ENCODE measurements at regions of chr1 and their contacts with region 1.

Region 1: GRCh38 chr1:31564134-31564989 is 12.0 kb upstream of the TINAGL1 start:
- DNase-seq: no peak
- ATAC-seq: peak; percentile 89
- H3K4me3 ChIP-seq: no peak overlapping the region
- H3K27ac ChIP-seq: no peak overlapping the region
- H3K4me1 ChIP-seq: peaks cover 0 to 4% of the 10 kb centered on the region in 2 donors
- H3K27me3 ChIP-seq: no peaks in the 10 kb centered on the region

Region 2: DNA sequence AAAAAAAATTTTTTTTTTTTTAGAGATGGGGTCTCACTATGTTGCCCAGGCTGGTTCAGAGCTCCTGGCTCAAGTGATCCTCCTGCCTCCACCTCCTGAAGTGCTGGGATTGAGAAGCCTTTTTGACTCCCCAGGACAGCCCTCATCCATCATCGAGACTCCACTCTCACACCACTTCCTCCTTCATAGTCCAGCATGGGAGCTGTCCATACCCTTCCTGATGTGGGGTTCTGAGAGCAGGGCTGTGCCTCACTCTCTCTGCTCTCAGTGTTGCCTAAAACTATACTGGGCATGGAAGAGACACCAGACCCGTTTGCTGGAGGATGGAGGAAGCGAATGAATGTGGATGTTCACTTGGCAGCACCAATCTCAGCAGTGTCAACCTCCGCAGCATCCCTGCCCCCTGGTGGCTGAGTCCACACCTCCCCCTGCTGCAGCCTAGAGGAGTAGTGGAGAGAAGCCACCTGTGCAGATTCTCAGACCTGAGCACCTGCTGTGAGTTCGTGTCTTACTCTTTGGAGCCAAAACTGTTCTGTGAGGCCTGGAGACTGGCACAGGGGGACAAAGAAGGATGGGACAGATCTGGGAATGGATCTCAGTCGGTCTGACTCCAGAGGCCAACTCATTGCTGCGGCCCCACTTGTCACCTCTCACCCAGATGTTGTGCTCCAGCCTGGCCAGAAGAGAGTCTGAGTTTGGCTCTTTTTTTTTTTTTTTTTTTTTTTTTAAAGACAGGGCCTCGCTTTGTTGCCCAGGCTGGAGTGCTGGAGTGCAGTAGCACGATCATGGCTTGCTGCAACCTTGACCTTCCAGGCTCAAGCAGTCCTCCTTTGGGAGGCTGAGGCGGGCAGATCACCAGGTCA is 29.6 kb after region 1 on chr1:
- intact Hi-C with region 1: loop called (anchors 1 kb)
- DNase-seq: peak; percentile 89 to 96
- ATAC-seq: peak; percentile 85
- H3K4me3 ChIP-seq: no peak overlapping the region
- H3K27ac ChIP-seq: no peak overlapping the region
- H3K4me1 ChIP-seq: no peaks in the 10 kb centered on the region
- H3K27me3 ChIP-seq: no peaks in the 10 kb centered on the region

Region 3: GRCh38 chr1:31617917-31618660 is 53.7 kb after region 1 on chr1:
- intact Hi-C with region 1: loop called in 1 of 2 experiments (anchors 2 kb)
- DNase-seq: peak in 1 of 2 donors; percentile 87
- ATAC-seq: peak; percentile 58
- H3K4me3 ChIP-seq: peak overlapping the region; percentile 34 to 50
- H3K27ac ChIP-seq: no peak overlapping the region
- H3K4me1 ChIP-seq: no peaks in the 10 kb centered on the region
- H3K27me3 ChIP-seq: no peaks in the 10 kb centered on the region

Region 4: GRCh38 chr1:31644560-31645273 is 80.4 kb after region 1 on chr1 and contains the start of gene PEF1:
- intact Hi-C with region 1: loop called in 1 of 2 experiments (anchors 1 kb)
- DNase-seq: peak; percentile 99 to 100
- ATAC-seq: peak; percentile 97
- H3K4me3 ChIP-seq: peak within 1 kb of the TSS; percentile 52 to 59
- H3K27ac ChIP-seq: peak within 1 kb of the TSS; percentile 24 to 93
- H3K4me1 ChIP-seq: peaks cover 7 to 9% of the 10 kb centered on the region in 2 donors
- H3K27me3 ChIP-seq: no peaks in the 10 kb centered on the region
- total RNA-seq, gene PEF1: 57.9 to 65.0 TPM

Region 5: DNA sequence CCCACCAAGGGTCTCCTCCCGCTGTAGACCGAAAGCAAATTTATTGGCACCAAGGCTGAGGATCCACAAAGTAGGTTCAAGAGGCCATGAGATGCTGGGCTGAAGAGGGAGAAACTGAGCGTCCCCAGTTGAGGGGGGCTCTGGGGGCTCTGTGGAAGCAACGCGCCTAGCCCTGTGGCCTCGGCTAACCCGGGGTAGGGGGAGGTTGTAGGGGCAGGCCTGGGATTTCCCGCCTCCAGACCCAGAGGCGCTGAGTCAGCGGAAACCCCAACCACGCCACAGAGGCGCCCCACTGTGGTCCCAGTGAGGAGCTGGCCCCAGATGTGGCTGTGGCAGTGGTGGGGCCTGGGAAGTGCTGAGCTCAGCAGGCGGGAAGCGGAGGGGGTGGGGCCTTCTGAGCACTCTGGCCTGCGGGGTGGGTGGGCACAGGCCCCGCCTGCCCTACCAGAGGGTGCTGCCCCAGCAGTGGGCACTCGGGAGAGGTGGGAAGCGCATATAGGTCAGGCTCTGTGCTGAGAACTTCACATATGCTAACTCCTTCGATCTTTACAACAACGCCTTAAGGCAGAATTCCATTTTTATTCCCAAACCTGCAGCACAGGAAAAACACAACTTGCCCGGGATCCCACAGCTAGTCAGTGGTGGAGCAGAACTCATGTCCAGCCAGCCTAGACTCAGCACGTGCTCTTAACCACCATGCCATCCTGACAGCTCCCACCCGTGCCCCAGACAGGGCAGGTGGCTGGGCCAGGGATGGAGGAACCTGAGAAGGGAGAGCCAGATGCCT is 140.9 kb after region 1 on chr1:
- intact Hi-C with region 1: loop called (anchors 5 to 10 kb)
- DNase-seq: peak; percentile 79 to 89
- ATAC-seq: peak; percentile 31
- H3K4me3 ChIP-seq: no peak overlapping the region
- H3K27ac ChIP-seq: peak overlapping the region in 1 of 2 donors; percentile 60
- H3K4me1 ChIP-seq: no peaks in the 10 kb centered on the region
- H3K27me3 ChIP-seq: no peaks in the 10 kb centered on the region

Region 6: DNA sequence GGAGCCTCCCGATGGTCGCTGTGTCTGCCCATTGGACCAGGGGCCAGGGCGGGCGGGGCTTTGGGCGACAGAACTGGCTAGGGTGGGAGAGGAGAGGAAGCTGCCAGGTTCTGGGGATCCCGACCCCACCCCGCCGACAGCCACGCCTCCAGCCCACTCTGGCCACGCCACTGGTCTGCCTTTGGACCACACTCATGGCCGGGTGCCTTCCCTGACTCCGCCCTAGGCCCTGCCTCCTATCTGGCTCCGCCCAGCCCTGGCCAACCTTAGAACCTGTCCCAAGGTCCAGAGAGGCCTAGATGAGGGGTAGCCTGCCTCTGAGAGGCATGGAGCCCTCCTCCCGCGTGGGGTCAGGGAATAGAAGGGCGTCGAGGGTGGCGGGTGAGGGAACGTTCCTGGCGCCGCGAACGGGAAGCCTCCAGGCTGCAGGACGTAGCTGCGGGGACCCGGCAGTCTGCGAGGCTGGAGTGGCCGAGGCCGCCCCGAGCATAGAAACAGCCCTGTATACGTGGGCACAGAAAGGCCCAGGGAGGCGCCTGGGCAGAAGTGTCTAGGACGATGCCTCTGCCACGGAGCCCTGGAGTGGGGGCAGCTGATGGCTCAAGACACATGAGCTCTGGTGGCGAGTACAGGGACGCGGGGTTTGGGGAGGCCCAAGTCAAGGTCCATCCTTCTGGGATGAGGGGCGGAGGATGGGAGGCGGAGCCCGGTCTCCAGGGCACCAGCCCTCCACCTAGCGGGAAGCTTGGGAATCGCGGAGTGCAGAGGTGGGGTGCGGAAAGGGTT is 150.9 kb after region 1 on chr1:
- intact Hi-C with region 1: loop called (anchors 5 to 10 kb)
- DNase-seq: peak; percentile 97 to 98
- ATAC-seq: peak; percentile 97
- H3K4me3 ChIP-seq: no peak overlapping the region
- H3K27ac ChIP-seq: peak overlapping the region; percentile 47 to 75
- H3K4me1 ChIP-seq: no peaks in the 10 kb centered on the region
- H3K27me3 ChIP-seq: no peaks in the 10 kb centered on the region

Region 7: DNA sequence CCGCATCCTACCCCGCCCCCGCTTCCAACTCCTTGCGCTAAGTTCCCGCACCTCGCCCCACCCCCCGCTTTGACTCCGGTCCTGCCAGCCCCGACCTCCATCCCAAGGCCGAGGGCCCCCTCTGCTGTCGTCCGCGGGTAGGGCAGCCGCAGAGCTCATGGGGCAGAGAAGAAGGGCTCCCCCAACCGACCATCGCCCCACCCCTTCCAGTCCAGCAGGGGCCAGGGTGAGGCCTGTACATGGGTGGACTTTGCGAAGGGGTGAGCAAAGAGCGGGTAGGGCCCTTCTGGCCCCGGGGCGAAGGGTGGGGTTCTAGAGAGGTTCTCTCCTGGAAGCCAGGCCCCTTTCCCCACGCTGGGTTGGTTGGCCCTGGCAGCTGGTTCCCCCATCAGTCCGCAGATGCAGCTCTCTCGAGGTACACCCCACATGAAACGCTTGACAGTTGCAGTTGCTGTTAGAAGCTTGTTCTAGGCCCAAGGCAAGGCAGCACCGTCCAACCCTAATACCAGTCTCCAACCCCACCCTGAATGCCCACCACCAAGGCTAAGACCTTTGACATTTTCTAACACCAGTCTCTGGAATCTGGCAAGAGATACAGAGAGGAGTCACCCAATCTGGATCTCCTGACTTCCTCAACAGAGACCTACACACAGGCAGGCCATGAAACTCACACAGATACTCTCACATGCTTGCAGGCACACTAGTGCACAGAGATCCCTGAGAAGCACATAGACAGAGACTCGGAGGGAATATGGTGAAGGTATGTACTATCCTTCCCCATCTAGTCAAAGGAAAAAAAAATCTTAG is 225.1 kb after region 1 on chr1:
- intact Hi-C with region 1: loop called (anchors 5 to 10 kb)
- DNase-seq: peak; percentile 97 to 99
- ATAC-seq: peak; percentile 95
- H3K4me3 ChIP-seq: peak overlapping the region; percentile 5 to 49
- H3K27ac ChIP-seq: no peak overlapping the region
- H3K4me1 ChIP-seq: no peaks in the 10 kb centered on the region
- H3K27me3 ChIP-seq: no peaks in the 10 kb centered on the region